ENCODE measurements at regions of chr17 and their contacts with region 1.

Region 1: GRCh38 chr17:77331301-77331864 is 190.6 kb downstream of the SEC14L1 start:
- DNase-seq: peak; percentile 88 to 98 (median 93)
- ATAC-seq: peak; percentile 95
- H3K4me3 ChIP-seq: peak overlapping the region; percentile 10
- H3K4me3 Mint-ChIP-seq: peak overlapping the region; percentile 78 to 91 (median 84)
- H3K27ac ChIP-seq: peak overlapping the region; percentile 66
- H3K27ac Mint-ChIP-seq: peak overlapping the region; percentile 70 to 98 (median 91)
- H3K4me1 ChIP-seq: peaks cover 29% of the 10 kb centered on the region in 2 donors
- H3K4me1 Mint-ChIP-seq: peaks cover 37 to 55% (median 48%) of the 10 kb centered on the region in 7 donors
- H3K27me3 ChIP-seq: no peaks in the 10 kb centered on the region
- H3K27me3 Mint-ChIP-seq: no peaks in the 10 kb centered on the region

Region 2: GRCh38 chr17:76501018-76501826 is 830.2 kb before region 1 on chr17 and contains the start of gene RHBDF2:
- CTCF ChIA-PET with region 1: no interaction called
- POLR2A ChIA-PET with region 1: no interaction called
- intact Hi-C with region 1: no loop called
- DNase-seq: peak; percentile 90 to 100 (median 95)
- ATAC-seq: peak; percentile 99
- H3K4me3 ChIP-seq: peak within 1 kb of the TSS; percentile 62
- H3K4me3 Mint-ChIP-seq: peak within 1 kb of the TSS; percentile 82 to 91 (median 86)
- H3K27ac ChIP-seq: peak within 1 kb of the TSS; percentile 73
- H3K27ac Mint-ChIP-seq: peak within 1 kb of the TSS; percentile 95 to 99 (median 97)
- H3K4me1 ChIP-seq: peaks cover 22 to 44% of the 10 kb centered on the region in 2 donors
- H3K4me1 Mint-ChIP-seq: peaks cover 17 to 61% (median 35%) of the 10 kb centered on the region in 7 donors
- H3K27me3 ChIP-seq: no peaks in the 10 kb centered on the region
- H3K27me3 Mint-ChIP-seq: no peaks in the 10 kb centered on the region
- total RNA-seq, gene RHBDF2: 31.1 to 119 (median 35.4) TPM

Region 3: DNA sequence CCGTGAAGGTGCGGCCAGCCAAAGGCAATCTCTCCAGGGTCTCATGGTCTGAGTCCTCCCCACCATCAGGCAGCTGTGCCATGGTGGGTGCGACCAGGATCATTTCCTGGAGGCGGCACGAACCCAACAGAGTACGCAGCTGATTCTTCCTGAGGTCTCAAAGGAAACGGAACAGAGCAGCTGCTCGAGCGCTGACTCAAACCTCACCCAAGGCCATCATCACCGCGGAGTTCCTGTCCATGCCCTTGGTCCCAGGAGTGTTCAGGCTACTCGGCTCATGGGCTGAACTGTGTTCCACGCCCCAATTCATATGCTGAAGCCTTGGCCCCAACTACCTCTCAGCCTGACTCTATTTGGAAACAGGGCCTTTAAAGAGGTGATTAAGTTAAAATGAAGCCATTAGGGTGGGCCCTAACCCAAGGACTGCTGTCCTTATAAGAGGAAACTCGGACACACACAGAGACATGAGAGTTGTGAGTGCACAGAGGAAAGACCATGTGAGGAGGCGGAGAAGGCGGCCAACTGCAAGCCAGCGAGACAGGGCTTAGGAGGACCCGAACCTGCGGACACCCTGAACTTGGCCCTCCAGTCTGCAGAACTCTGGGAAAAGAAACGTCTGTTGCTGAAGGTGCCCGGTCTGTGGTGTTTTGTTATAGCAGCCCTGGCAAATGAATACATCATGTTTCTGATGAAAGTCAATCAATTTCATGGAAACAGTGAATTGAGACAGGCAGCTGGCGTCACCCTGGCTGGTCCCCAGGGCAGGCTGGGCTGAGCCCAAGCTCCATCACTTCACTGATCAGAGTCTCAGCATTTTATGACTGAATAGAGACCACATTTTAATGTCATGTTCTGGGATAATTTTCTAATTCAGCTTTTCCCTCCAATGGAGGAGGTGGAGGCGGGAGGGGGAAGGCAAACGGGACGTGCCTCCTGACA is 634.4 kb before region 1 on chr17:
- CTCF ChIA-PET with region 1: no interaction called
- POLR2A ChIA-PET with region 1: no interaction called
- intact Hi-C with region 1: no loop called
- DNase-seq: no peak
- ATAC-seq: no peak
- H3K4me3 ChIP-seq: no peak overlapping the region
- H3K4me3 Mint-ChIP-seq: no peak overlapping the region
- H3K27ac ChIP-seq: no peak overlapping the region
- H3K27ac Mint-ChIP-seq: peak overlapping the region in 1 of 9 donors; percentile 38
- H3K4me1 ChIP-seq: no peaks in the 10 kb centered on the region
- H3K4me1 Mint-ChIP-seq: peaks cover 0 to 16% (median 0%) of the 10 kb centered on the region in 7 donors
- H3K27me3 ChIP-seq: no peaks in the 10 kb centered on the region
- H3K27me3 Mint-ChIP-seq: peaks cover 0 to 6% (median 0%) of the 10 kb centered on the region in 5 donors

Region 4: DNA sequence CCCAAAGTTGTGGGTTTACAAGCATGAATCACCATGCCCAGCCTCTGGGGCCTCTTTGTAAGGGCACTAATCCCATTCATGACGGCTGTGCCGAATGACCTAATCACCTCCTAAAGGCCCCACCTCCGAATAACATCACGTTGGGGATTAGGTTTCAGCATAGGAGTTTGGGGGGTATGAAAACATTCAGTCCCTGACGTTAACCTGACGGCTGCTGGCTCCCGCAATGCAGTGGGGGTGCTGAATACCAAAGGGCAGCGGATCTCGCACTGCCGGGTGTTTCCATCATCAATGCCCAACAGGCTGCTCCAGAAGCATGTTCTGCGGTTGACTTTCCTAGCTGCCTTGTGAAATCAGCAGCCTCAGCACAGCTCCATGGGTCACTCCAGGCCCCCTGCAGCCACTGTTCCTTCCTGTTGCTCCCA is 311.4 kb before region 1 on chr17:
- CTCF ChIA-PET with region 1: no interaction called
- POLR2A ChIA-PET with region 1: no interaction called
- intact Hi-C with region 1: no loop called
- DNase-seq: no peak
- ATAC-seq: no peak
- H3K4me3 ChIP-seq: no peak overlapping the region
- H3K4me3 Mint-ChIP-seq: no peak overlapping the region
- H3K27ac ChIP-seq: no peak overlapping the region
- H3K27ac Mint-ChIP-seq: no peak overlapping the region
- H3K4me1 ChIP-seq: no peaks in the 10 kb centered on the region
- H3K4me1 Mint-ChIP-seq: no peaks in the 10 kb centered on the region
- H3K27me3 ChIP-seq: no peaks in the 10 kb centered on the region
- H3K27me3 Mint-ChIP-seq: peaks cover 0 to 20% (median 0%) of the 10 kb centered on the region in 5 donors

Region 5: GRCh38 chr17:77345260-77345910 is 14.0 kb after region 1 on chr17:
- CTCF ChIA-PET with region 1: interaction called, 5 read pairs
- POLR2A ChIA-PET with region 1: interaction called, 7 read pairs
- intact Hi-C with region 1: loop called (anchors 1 kb)
- DNase-seq: peak in 1 of 9 donors; percentile 13
- ATAC-seq: no peak
- H3K4me3 ChIP-seq: no peak overlapping the region
- H3K4me3 Mint-ChIP-seq: no peak overlapping the region
- H3K27ac ChIP-seq: no peak overlapping the region
- H3K27ac Mint-ChIP-seq: peak overlapping the region in 6 of 9 donors; percentile 7 to 74 (median 42)
- H3K4me1 ChIP-seq: peaks cover 27 to 39% of the 10 kb centered on the region in 2 donors
- H3K4me1 Mint-ChIP-seq: peaks cover 37 to 57% (median 51%) of the 10 kb centered on the region in 7 donors
- H3K27me3 ChIP-seq: no peaks in the 10 kb centered on the region
- H3K27me3 Mint-ChIP-seq: no peaks in the 10 kb centered on the region

Region 6: DNA sequence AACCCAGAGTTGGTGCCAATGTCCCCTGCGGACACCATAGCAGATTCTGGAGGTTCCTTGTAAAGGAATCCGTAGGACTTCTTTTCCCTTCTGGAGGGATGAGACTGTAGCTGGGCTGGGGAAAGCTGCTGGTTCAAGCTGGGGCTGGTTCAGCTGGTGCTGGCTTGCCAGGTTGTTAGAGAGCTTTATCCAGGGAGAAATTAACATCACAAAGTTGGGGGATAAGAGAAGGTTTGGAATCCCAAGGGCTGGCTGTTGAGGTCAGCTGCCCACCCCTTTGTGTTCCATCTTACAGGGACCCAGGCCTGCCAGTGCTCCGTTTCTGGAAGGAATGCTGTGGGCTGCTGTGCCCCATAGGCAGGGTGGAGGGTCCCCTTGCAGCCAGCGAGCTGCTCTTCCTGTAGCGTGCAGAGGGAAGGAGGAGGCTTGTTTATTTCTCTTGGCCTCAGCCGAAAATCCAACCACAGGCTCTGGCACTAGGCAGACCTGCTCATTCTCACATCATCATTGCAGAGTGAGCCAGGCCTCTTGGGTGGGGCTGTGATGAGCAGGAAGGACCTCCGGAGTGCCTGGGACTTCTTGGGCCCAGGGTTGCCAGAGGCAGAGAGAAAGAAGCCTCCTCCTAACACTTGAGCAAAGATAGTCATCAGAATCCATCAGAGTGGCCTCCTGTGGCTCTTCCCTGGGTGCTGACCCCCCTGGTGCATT is 60.4 kb after region 1 on chr17:
- CTCF ChIA-PET with region 1: interaction called, 4 read pairs
- POLR2A ChIA-PET with region 1: interaction called, 33 read pairs
- intact Hi-C with region 1: loop called in 1 of 2 experiments (anchors 5 kb)
- DNase-seq: peak in 4 of 9 donors; percentile 42 to 59 (median 48)
- ATAC-seq: no peak
- H3K4me3 ChIP-seq: peak overlapping the region; percentile 14
- H3K4me3 Mint-ChIP-seq: peak overlapping the region; percentile 61 to 87 (median 74)
- H3K27ac ChIP-seq: peak overlapping the region; percentile 50
- H3K27ac Mint-ChIP-seq: peak overlapping the region; percentile 65 to 95 (median 89)
- H3K4me1 ChIP-seq: peaks cover 68 to 79% of the 10 kb centered on the region in 2 donors
- H3K4me1 Mint-ChIP-seq: peaks cover 64 to 91% (median 82%) of the 10 kb centered on the region in 7 donors
- H3K27me3 ChIP-seq: no peaks in the 10 kb centered on the region
- H3K27me3 Mint-ChIP-seq: no peaks in the 10 kb centered on the region

Region 7: GRCh38 chr17:77437017-77437416 is 105.6 kb after region 1 on chr17:
- CTCF ChIA-PET with region 1: interaction called, 23 read pairs
- POLR2A ChIA-PET with region 1: interaction called, 14 read pairs
- intact Hi-C with region 1: loop called (anchors 1 to 5 kb)
- DNase-seq: peak in 1 of 9 donors; percentile 53
- ATAC-seq: peak; percentile 17
- H3K4me3 ChIP-seq: peak overlapping the region; percentile 67
- H3K4me3 Mint-ChIP-seq: peak overlapping the region; percentile 84 to 98 (median 95)
- H3K27ac ChIP-seq: peak overlapping the region; percentile 92
- H3K27ac Mint-ChIP-seq: peak overlapping the region; percentile 85 to 100 (median 99)
- H3K4me1 ChIP-seq: peaks cover 91 to 99% of the 10 kb centered on the region in 2 donors
- H3K4me1 Mint-ChIP-seq: peaks cover 65 to 94% (median 88%) of the 10 kb centered on the region in 7 donors
- H3K27me3 ChIP-seq: no peaks in the 10 kb centered on the region
- H3K27me3 Mint-ChIP-seq: no peaks in the 10 kb centered on the region

Region 8: GRCh38 chr17:77465358-77466041 is 134.1 kb after region 1 on chr17:
- CTCF ChIA-PET with region 1: interaction called, 4 read pairs
- POLR2A ChIA-PET with region 1: interaction called, 7 read pairs
- intact Hi-C with region 1: loop called in 1 of 2 experiments (anchors 1 kb)
- DNase-seq: peak in 8 of 9 donors; percentile 67 to 89 (median 87)
- ATAC-seq: peak; percentile 97
- H3K4me3 ChIP-seq: peak overlapping the region; percentile 54
- H3K4me3 Mint-ChIP-seq: peak overlapping the region; percentile 79 to 87 (median 84)
- H3K27ac ChIP-seq: peak overlapping the region; percentile 64
- H3K27ac Mint-ChIP-seq: peak overlapping the region; percentile 88 to 100 (median 94)
- H3K4me1 ChIP-seq: peaks cover 88 to 90% of the 10 kb centered on the region in 2 donors
- H3K4me1 Mint-ChIP-seq: peaks cover 74 to 96% (median 86%) of the 10 kb centered on the region in 7 donors
- H3K27me3 ChIP-seq: no peaks in the 10 kb centered on the region
- H3K27me3 Mint-ChIP-seq: no peaks in the 10 kb centered on the region

Region 9: DNA sequence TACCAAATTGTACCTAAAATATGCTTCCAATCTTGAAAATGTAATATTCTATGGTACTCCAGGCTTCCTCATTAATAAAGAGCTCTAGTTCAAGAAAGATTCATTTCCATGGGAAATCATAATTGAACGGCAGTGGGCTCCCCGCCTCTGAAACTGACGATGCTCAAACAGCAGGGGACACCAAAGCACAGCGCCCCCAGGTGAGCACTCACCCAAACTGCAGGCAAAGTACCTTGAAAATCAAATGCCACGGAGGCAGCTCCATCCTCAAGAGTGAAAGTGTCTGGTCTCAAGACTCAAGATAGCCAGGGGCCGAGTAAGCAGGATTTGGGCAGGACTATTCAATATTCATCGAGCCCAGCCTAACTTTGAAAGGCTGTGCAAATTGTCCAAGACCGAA is 409.7 kb after region 1 on chr17:
- CTCF ChIA-PET with region 1: no interaction called
- POLR2A ChIA-PET with region 1: no interaction called
- intact Hi-C with region 1: no loop called
- DNase-seq: peak in 8 of 9 donors; percentile 10 to 58 (median 30)
- ATAC-seq: peak; percentile 45
- H3K4me3 ChIP-seq: no peak overlapping the region
- H3K4me3 Mint-ChIP-seq: no peak overlapping the region
- H3K27ac ChIP-seq: no peak overlapping the region
- H3K27ac Mint-ChIP-seq: peak overlapping the region in 1 of 9 donors; percentile 33
- H3K4me1 ChIP-seq: no peaks in the 10 kb centered on the region
- H3K4me1 Mint-ChIP-seq: peaks cover 0 to 3% (median 0%) of the 10 kb centered on the region in 7 donors
- H3K27me3 ChIP-seq: no peaks in the 10 kb centered on the region
- H3K27me3 Mint-ChIP-seq: peaks cover 0 to 11% (median 0%) of the 10 kb centered on the region in 5 donors

Measured in naive thymus-derived CD4-positive, alpha-beta T cell (primary cell).